Activated T-helper 1 cell treated with anti-CD3 and anti-CD28 coated beads, Interleukin-12 subunit alpha, Interleukin-12 subunit beta, Interleukin-2, Interleukin-4 antibody, amounts not matched to agents 30 ng/mL and 10 ng/mL and 1 ng/mL, durations not matched to agents 14 hours and 24 hours and 36 hours (primary cell): ENCODE measurements at regions of chr2 and their contacts with region 1.

Region 1: GRCh38 chr2:125450099-125450498 is 1205.9 kb upstream of the GYPC start:
- DNase-seq: no peak
- H3K4me3 Mint-ChIP-seq: no peak overlapping the region
- H3K27ac Mint-ChIP-seq: no peak overlapping the region
- H3K4me1 Mint-ChIP-seq: no peaks in the 10 kb centered on the region
- H3K27me3 Mint-ChIP-seq: no peaks in the 10 kb centered on the region

Region 2: DNA sequence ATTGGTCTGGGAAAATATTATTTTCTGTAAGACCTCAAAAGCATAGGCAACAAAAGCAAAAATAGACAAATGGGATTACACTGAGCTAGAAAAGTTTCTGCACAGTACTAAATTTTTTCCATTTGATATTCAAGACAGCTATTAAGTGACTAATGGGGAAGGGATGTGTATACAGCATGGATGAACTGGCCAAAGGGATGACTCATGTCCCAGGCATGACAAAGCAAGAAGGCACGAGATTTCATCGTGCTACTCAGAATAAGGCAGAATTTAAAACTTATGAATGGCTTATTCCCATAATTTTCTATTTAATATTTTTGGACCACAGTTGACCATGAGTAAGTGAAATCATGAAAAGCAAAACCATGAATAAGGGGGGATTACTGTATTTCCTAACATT is 44.3 kb before region 1 on chr2:
- intact Hi-C with region 1: loop called (anchors 5 kb)
- DNase-seq: no peak
- H3K4me3 Mint-ChIP-seq: no peak overlapping the region
- H3K27ac Mint-ChIP-seq: no peak overlapping the region
- H3K4me1 Mint-ChIP-seq: no peaks in the 10 kb centered on the region
- H3K27me3 Mint-ChIP-seq: no peaks in the 10 kb centered on the region

Region 3: GRCh38 chr2:125615438-125615837 is 165.3 kb after region 1 on chr2:
- intact Hi-C with region 1: no loop called
- DNase-seq: no peak
- H3K4me3 Mint-ChIP-seq: no peak overlapping the region
- H3K27ac Mint-ChIP-seq: no peak overlapping the region
- H3K4me1 Mint-ChIP-seq: no peaks in the 10 kb centered on the region
- H3K27me3 Mint-ChIP-seq: no peaks in the 10 kb centered on the region

Region 4: DNA sequence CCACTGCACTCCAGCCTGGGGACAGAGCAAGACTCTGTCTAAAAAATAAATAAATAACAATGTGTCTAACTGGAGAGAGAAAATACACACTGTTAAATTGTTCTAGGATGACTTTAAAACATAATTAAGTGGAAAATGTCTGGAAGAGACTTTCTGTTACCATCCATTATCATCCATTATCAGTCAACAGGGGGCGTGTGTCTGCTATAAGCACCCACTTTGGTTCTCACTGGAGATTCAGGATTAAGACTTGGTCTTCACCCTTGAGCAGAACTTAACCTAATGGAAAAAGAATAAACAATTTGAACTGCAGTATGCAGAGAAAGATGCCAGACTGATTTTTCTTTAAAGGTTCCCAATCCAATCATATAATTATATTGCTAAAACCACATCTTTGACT is 206.1 kb after region 1 on chr2:
- intact Hi-C with region 1: no loop called
- DNase-seq: no peak
- H3K4me3 Mint-ChIP-seq: no peak overlapping the region
- H3K27ac Mint-ChIP-seq: no peak overlapping the region
- H3K4me1 Mint-ChIP-seq: no peaks in the 10 kb centered on the region
- H3K27me3 Mint-ChIP-seq: no peaks in the 10 kb centered on the region